WTC11 (cell line): ENCODE measurements at regions of chr16 and their contacts with region 1.

Region 1: GRCh38 chr16:50806099-50807062 is 64.5 kb downstream of the CYLD start:
- DNase-seq: peak; percentile 90
- ATAC-seq: peak; percentile 88
- H3K4me3 Mint-ChIP-seq: peak overlapping the region; percentile 61
- H3K27ac Mint-ChIP-seq: no peak overlapping the region
- H3K4me1 Mint-ChIP-seq: peaks cover 28% of the 10 kb centered on the region
- H3K27me3 Mint-ChIP-seq: no peaks in the 10 kb centered on the region
- CTCF ChIP-seq: peak; percentile 94

Region 2: GRCh38 chr16:50449755-50450154 is 356.6 kb before region 1 on chr16:
- CTCF ChIA-PET with region 1: no interaction called
- POLR2A ChIA-PET with region 1: no interaction called
- DNase-seq: no peak
- ATAC-seq: no peak
- H3K4me3 Mint-ChIP-seq: no peak overlapping the region
- H3K27ac Mint-ChIP-seq: no peak overlapping the region
- H3K4me1 Mint-ChIP-seq: peaks cover 52% of the 10 kb centered on the region
- H3K27me3 Mint-ChIP-seq: peaks cover 4% of the 10 kb centered on the region
- CTCF ChIP-seq: no peak

Region 3: DNA sequence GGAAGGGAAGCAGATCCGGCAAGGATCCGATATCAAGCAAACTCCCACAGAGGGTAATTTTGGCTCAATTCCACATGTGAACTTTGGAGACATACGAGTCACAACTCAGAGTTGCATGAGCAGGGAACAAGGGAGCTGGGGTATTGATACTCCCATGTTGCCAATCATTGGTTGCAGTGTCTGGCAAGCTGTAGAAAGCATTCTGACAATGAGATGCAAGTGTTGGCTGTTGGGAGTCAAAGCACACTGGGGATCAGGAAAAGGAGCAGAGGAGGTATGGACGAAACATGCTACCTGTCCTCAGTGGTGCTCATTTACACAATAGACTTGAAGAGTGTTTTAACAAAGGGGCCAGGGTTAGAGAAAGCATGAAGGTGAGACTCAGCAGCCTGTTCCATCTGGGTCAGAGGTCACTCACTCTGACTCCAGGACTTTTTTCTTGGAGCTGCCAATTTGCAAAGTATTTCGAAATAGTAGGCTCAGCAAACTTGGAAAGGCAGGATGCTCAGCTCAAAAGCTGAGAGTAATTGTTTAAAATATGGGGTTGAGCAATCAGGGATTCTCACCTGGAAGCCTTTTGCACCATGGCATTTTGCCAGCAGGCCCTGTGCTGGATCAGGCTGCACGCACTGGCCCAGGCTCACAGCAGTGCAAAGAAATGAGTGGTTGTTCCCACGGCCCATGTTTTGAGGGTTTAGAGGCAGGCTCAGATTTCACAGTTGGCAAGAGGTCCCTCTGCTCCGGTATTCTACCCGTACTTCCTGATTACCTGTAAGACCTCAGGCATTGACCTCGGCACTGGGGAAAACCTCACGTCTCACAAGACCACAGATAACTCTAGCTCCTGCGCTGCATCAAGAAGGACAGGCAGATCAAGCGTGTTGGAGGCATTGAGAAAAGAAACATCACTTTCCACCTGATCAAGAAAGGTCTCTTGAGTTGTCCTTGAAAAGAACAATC is 275.8 kb before region 1 on chr16:
- CTCF ChIA-PET with region 1: no interaction called
- POLR2A ChIA-PET with region 1: no interaction called
- DNase-seq: no peak
- ATAC-seq: no peak
- H3K4me3 Mint-ChIP-seq: no peak overlapping the region
- H3K27ac Mint-ChIP-seq: no peak overlapping the region
- H3K4me1 Mint-ChIP-seq: no peaks in the 10 kb centered on the region
- H3K27me3 Mint-ChIP-seq: peaks cover 13% of the 10 kb centered on the region
- CTCF ChIP-seq: no peak

Region 4: GRCh38 chr16:50555952-50556673 is 250.3 kb before region 1 on chr16:
- CTCF ChIA-PET with region 1: interaction called, 10 read pairs
- POLR2A ChIA-PET with region 1: no interaction called
- DNase-seq: no peak
- ATAC-seq: no peak
- H3K4me3 Mint-ChIP-seq: no peak overlapping the region
- H3K27ac Mint-ChIP-seq: no peak overlapping the region
- H3K4me1 Mint-ChIP-seq: no peaks in the 10 kb centered on the region
- H3K27me3 Mint-ChIP-seq: no peaks in the 10 kb centered on the region
- CTCF ChIP-seq: no peak

Region 5: GRCh38 chr16:50627419-50627818 is 179.0 kb before region 1 on chr16:
- CTCF ChIA-PET with region 1: interaction called, 13 read pairs
- POLR2A ChIA-PET with region 1: no interaction called
- DNase-seq: peak; percentile 42
- ATAC-seq: peak; percentile 89
- H3K4me3 Mint-ChIP-seq: no peak overlapping the region
- H3K27ac Mint-ChIP-seq: no peak overlapping the region
- H3K4me1 Mint-ChIP-seq: peaks cover 3% of the 10 kb centered on the region; the same call in 1 of the 2 replicates
- H3K27me3 Mint-ChIP-seq: no peaks in the 10 kb centered on the region
- CTCF ChIP-seq: no peak

Region 6: DNA sequence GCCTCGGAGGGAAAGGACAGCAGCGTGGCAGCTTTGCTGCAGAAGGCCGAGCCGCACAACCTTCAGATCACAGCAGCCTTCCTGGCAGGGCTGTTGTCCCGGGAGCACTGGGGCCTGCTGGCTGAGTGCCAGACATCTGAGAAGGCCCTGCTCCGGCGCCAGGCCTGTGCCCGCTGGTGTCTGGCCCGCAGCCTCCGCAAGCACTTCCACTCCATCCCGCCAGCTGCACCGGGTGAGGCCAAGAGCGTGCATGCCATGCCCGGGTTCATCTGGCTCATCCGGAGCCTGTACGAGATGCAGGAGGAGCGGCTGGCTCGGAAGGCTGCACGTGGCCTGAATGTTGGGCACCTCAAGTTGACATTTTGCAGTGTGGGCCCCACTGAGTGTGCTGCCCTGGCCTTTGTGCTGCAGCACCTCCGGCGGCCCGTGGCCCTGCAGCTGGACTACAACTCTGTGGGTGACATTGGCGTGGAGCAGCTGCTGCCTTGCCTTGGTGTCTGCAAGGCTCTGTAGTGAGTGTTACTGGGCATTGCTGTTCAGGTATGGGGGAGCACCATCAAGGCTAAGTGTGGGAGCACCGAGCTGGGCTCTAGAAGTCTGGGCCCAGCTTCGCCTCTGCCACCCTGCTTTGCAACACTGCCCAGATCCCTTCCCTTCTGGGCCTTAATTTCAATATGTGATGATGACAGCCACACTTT is 94.4 kb before region 1 on chr16:
- CTCF ChIA-PET with region 1: interaction called, 11 read pairs
- POLR2A ChIA-PET with region 1: no interaction called
- DNase-seq: no peak
- ATAC-seq: no peak
- H3K4me3 Mint-ChIP-seq: no peak overlapping the region
- H3K27ac Mint-ChIP-seq: no peak overlapping the region
- H3K4me1 Mint-ChIP-seq: peaks cover 3% of the 10 kb centered on the region; the same call in 1 of the 2 replicates
- H3K27me3 Mint-ChIP-seq: no peaks in the 10 kb centered on the region; the same call in 1 of the 2 replicates
- CTCF ChIP-seq: no peak

Region 7: GRCh38 chr16:50776037-50776436 is 30.3 kb before region 1 on chr16:
- CTCF ChIA-PET with region 1: interaction called, 49 read pairs
- POLR2A ChIA-PET with region 1: no interaction called
- DNase-seq: no peak
- ATAC-seq: no peak
- H3K4me3 Mint-ChIP-seq: no peak overlapping the region
- H3K27ac Mint-ChIP-seq: no peak overlapping the region
- H3K4me1 Mint-ChIP-seq: no peaks in the 10 kb centered on the region
- H3K27me3 Mint-ChIP-seq: no peaks in the 10 kb centered on the region; the same call in 1 of the 2 replicates
- CTCF ChIP-seq: no peak

Region 8: GRCh38 chr16:50836121-50836621 is 29.8 kb after region 1 on chr16:
- CTCF ChIA-PET with region 1: interaction called, 17 read pairs
- POLR2A ChIA-PET with region 1: interaction called, 3 read pairs
- DNase-seq: no peak
- ATAC-seq: no peak
- H3K4me3 Mint-ChIP-seq: no peak overlapping the region
- H3K27ac Mint-ChIP-seq: no peak overlapping the region
- H3K4me1 Mint-ChIP-seq: peaks cover 15% of the 10 kb centered on the region
- H3K27me3 Mint-ChIP-seq: no peaks in the 10 kb centered on the region
- CTCF ChIP-seq: no peak

Region 9: DNA sequence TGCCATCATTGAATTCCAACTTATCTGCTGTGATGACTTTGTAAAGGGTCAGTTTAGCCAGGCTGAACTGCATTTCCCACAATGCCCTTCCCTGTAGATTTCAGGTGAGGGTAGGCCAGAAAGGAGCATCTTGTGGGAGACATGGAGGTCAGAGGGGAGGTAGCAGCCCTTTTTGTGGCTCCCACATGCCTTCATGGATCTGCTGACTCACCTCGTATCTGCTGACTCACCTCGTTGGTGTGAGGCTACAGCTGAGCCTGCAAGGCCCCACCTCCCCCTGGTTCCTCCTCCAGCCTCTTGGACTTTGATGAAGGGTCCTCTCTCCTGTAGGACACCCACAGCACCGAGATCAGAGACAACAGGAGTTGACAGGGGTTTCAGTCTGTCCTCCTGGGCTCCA is 242.2 kb after region 1 on chr16:
- CTCF ChIA-PET with region 1: interaction called, 23 read pairs
- POLR2A ChIA-PET with region 1: no interaction called
- DNase-seq: no peak
- ATAC-seq: no peak
- H3K4me3 Mint-ChIP-seq: no peak overlapping the region
- H3K27ac Mint-ChIP-seq: no peak overlapping the region
- H3K4me1 Mint-ChIP-seq: peaks cover 9% of the 10 kb centered on the region; the same call in 1 of the 2 replicates
- H3K27me3 Mint-ChIP-seq: no peaks in the 10 kb centered on the region
- CTCF ChIP-seq: no peak